ENCODE measurements at regions of chr18 and their contacts with region 1.

Region 1: DNA sequence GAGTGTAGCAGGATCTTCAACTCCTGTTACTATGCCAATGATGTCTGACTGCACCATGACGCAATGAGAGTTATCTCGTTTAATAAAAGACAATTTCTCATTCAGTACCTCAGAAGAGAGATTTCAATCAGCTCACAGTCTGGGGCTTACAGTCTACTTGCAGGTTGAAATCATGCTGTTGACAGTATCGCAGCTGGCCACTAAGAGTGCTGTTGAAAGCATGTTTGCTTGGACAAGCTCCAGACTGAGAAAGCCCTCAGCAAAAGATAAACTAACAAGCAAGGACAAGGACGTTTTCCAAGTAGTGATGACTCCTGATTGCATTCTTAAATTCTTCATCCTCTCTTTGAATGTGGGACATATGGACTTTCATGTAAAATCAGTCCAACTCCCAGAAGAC is 145.2 kb upstream of the SYT4 start:
- DNase-seq: no peak
- H3K4me3 ChIP-seq: no peak overlapping the region
- H3K27ac ChIP-seq: no peak overlapping the region
- H3K4me1 ChIP-seq: no peaks in the 10 kb centered on the region
- H3K27me3 ChIP-seq: no peaks in the 10 kb centered on the region
- CTCF ChIP-seq: peak; percentile 6 to 65 (median 48)
- EP300 ChIP-seq: no peak
- POLR2A ChIP-seq: no peak
- RAD21 ChIP-seq: peak; percentile 41 to 54; a peak in 3 of 4 replicates

Region 2: DNA sequence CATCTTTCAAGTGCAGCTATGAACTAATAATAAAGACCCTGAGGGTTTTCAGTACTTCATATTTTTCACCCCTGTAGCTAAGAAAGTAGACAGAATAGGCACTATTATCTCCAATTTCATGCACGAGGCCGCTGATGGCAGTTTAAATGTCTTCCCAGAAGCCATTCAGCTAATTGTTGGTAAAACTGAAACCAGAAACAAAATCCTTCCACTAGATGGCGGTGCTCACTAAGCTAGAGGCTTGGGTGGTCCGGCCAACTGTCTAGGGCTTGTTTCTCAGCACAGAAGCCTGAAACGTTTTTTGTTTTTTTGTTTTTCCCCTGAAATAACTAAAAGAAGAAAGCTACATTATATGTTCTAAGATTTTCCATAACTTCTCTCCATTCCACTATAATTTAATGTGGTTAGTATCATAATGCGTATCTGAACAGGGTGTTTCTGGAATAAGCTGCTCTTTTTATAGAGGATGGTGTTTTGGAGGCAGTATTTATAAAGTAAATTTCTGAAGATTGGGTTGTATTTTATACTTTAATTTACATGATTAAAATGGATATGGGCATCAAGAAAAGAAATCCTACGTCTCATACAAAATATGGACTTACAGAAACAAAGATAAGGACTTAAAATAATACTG is 1308.1 kb before region 1 on chr18:
- CTCF ChIA-PET with region 1: interaction called, 11 read pairs
- POLR2A ChIA-PET with region 1: no interaction called
- DNase-seq: peak; percentile 36 to 78
- H3K4me3 ChIP-seq: no peak overlapping the region
- H3K27ac ChIP-seq: no peak overlapping the region
- H3K4me1 ChIP-seq: no peaks in the 10 kb centered on the region
- H3K27me3 ChIP-seq: no peaks in the 10 kb centered on the region
- CTCF ChIP-seq: peak; percentile 30 to 85 (median 78)
- EP300 ChIP-seq: no peak
- POLR2A ChIP-seq: no peak
- RAD21 ChIP-seq: peak; percentile 98

Region 3: GRCh38 chr18:42298759-42299675 is 1123.5 kb before region 1 on chr18:
- CTCF ChIA-PET with region 1: interaction called, 26 read pairs
- POLR2A ChIA-PET with region 1: no interaction called
- DNase-seq: peak; percentile 64 to 87
- H3K4me3 ChIP-seq: no peak overlapping the region
- H3K27ac ChIP-seq: no peak overlapping the region
- H3K4me1 ChIP-seq: peaks cover 0 to 3% (median 0%) of the 10 kb centered on the region in 4 experiments; a peak in 3 of 7 replicates
- H3K27me3 ChIP-seq: no peaks in the 10 kb centered on the region
- CTCF ChIP-seq: peak; percentile 74 to 91 (median 79)
- EP300 ChIP-seq: no peak
- POLR2A ChIP-seq: no peak
- RAD21 ChIP-seq: peak; percentile 89 to 93

Region 4: DNA sequence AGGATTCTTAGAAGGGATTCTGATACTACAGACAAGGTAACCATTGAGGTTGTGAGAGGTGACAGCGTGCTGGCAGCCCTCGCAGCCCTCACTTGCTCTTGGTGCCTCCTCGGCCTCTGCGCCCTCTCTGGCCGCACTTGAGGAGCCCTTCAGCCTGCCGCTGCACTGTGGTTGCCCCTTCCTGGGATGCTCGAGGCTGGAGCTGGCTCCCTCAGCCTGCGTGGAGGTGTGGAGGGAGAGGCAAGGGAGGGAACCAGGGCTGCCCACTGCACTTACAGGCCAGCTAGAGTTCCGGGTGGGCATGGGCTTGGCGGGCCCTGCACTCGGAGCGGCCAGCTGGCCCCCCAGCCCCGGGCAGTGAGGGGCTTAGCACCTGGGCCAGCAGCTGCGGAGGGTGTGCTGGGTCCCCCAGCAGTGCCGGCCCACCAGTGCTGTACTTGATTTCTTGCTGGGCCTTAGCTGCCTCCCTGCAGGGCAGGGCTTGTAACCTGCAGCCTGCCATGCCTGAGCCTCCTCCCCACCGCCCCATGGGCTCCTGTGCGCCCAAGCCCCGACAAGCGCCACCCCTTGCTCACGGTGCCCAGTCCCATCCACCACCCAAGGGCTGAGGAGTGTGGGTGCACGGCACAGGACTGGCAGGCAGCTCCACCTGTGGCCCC is 283.1 kb before region 1 on chr18:
- CTCF ChIA-PET with region 1: no interaction called
- POLR2A ChIA-PET with region 1: no interaction called
- DNase-seq: no peak
- H3K4me3 ChIP-seq: no peak overlapping the region
- H3K27ac ChIP-seq: no peak overlapping the region
- H3K4me1 ChIP-seq: no peaks in the 10 kb centered on the region
- H3K27me3 ChIP-seq: no peaks in the 10 kb centered on the region
- CTCF ChIP-seq: no peak
- EP300 ChIP-seq: no peak
- POLR2A ChIP-seq: no peak
- RAD21 ChIP-seq: no peak

Region 5: GRCh38 chr18:43322132-43322531 is 100.4 kb before region 1 on chr18:
- CTCF ChIA-PET with region 1: no interaction called
- POLR2A ChIA-PET with region 1: no interaction called
- DNase-seq: no peak
- H3K4me3 ChIP-seq: no peak overlapping the region
- H3K27ac ChIP-seq: no peak overlapping the region
- H3K4me1 ChIP-seq: no peaks in the 10 kb centered on the region
- H3K27me3 ChIP-seq: no peaks in the 10 kb centered on the region
- CTCF ChIP-seq: no peak
- EP300 ChIP-seq: no peak
- POLR2A ChIP-seq: no peak
- RAD21 ChIP-seq: no peak

Region 6: GRCh38 chr18:43396266-43396665 is 26.3 kb before region 1 on chr18:
- CTCF ChIA-PET with region 1: interaction called, 17 read pairs
- POLR2A ChIA-PET with region 1: no interaction called
- DNase-seq: no peak
- H3K4me3 ChIP-seq: no peak overlapping the region
- H3K27ac ChIP-seq: no peak overlapping the region
- H3K4me1 ChIP-seq: no peaks in the 10 kb centered on the region
- H3K27me3 ChIP-seq: no peaks in the 10 kb centered on the region
- CTCF ChIP-seq: peak in 2 of 3 experiments; percentile 38 to 49; a peak in 2 of 4 replicates
- EP300 ChIP-seq: no peak
- POLR2A ChIP-seq: no peak
- RAD21 ChIP-seq: peak; percentile 71 to 77

Region 7: DNA sequence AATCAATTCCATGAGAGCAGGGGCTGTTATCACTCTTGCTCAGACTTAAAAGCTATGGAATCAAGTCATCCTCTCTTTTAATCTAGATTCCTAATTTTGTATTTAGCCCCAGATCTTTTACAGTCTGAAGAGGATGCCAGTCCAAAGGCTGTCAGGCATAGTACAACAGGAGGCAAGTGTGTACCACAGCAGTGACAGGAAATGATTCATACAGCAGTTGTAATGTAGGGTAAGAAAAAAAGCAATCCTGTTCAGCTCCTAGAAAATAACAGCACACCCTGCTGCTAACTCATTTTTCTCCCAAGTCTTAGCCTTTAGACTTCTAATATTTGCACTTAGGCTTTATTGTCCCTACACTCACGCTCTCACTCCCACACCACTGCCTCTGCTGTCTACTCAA is 17.4 kb before region 1 on chr18:
- CTCF ChIA-PET with region 1: interaction called, 22 read pairs
- POLR2A ChIA-PET with region 1: no interaction called
- DNase-seq: no peak
- H3K4me3 ChIP-seq: no peak overlapping the region
- H3K27ac ChIP-seq: no peak overlapping the region
- H3K4me1 ChIP-seq: no peaks in the 10 kb centered on the region
- H3K27me3 ChIP-seq: no peaks in the 10 kb centered on the region
- CTCF ChIP-seq: no peak
- EP300 ChIP-seq: no peak
- POLR2A ChIP-seq: no peak
- RAD21 ChIP-seq: no peak

Region 8: GRCh38 chr18:43435851-43436250 is 13.3 kb after region 1 on chr18:
- CTCF ChIA-PET with region 1: interaction called, 43 read pairs
- POLR2A ChIA-PET with region 1: no interaction called
- DNase-seq: no peak
- H3K4me3 ChIP-seq: no peak overlapping the region
- H3K27ac ChIP-seq: no peak overlapping the region
- H3K4me1 ChIP-seq: no peaks in the 10 kb centered on the region
- H3K27me3 ChIP-seq: no peaks in the 10 kb centered on the region
- CTCF ChIP-seq: no peak
- EP300 ChIP-seq: no peak
- POLR2A ChIP-seq: no peak
- RAD21 ChIP-seq: no peak